PC-3 (cell line): ENCODE measurements at regions of chr3 and their contacts with region 1.

Region 1: GRCh38 chr3:49013755-49014628 is 4.4 kb downstream of the DALRD3 start:
- DNase-seq: peak; percentile 69
- ATAC-seq: peak; percentile 24
- H3K4me3 ChIP-seq: no peak overlapping the region
- H3K27ac ChIP-seq: no peak overlapping the region
- H3K4me1 ChIP-seq: peaks cover 11% of the 10 kb centered on the region; the same call in 1 of the 2 replicates
- H3K27me3 ChIP-seq: no peaks in the 10 kb centered on the region
- CTCF ChIP-seq: peak; percentile 82

Region 2: DNA sequence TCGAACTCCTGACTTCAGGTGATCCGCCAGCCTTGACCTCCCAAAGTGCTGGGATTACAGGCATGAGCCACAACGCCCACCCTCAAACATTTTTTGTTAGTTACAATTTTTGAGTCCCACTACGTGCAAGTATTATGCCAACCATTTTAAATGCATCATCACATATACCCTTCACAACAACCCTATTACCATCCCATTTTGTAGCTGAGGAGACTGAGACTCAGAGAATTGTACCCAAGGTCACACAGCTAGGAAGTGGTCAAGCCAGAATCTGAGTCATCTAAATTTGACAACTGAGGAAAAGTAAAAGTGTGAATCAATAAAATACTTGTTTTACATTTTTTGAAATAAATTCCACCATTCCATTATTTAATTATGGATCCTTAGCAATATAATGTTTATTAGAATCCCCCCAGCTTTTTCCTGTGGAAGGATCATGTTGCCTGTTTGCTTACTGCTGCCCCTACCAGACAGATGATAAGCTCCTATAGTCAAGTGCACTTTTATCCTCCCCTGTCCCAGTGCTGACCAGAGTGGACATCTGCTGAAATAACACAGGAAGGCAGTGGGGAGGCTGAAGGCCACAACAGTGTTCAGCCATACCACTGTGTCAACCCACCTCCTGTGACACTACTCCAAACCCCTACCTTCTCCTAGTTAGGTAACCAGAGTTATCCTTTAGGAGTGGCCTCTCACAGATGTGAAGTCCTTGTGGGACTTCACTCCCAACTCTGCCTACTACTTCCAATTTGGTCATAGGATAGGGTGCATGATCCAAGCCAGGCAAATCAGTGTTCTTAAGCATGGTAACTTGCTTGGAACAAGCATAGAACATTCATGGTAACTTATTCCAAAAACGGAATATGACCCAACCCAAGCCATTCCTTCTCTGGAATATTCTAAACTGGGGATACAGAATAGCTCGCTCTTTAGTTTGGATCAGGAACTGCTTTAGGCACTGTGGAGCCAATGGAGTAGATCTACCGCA is 194.5 kb before region 1 on chr3:
- CTCF ChIA-PET with region 1: no interaction called
- POLR2A ChIA-PET with region 1: no interaction called
- intact Hi-C with region 1: no loop called
- DNase-seq: no peak
- ATAC-seq: no peak
- H3K4me3 ChIP-seq: no peak overlapping the region
- H3K27ac ChIP-seq: no peak overlapping the region
- H3K4me1 ChIP-seq: 0 out of 2 replicates have a peak, but pooled peaks cover 9% of the 10 kb centered on the region
- H3K27me3 ChIP-seq: no peaks in the 10 kb centered on the region
- CTCF ChIP-seq: no peak

Region 3: DNA sequence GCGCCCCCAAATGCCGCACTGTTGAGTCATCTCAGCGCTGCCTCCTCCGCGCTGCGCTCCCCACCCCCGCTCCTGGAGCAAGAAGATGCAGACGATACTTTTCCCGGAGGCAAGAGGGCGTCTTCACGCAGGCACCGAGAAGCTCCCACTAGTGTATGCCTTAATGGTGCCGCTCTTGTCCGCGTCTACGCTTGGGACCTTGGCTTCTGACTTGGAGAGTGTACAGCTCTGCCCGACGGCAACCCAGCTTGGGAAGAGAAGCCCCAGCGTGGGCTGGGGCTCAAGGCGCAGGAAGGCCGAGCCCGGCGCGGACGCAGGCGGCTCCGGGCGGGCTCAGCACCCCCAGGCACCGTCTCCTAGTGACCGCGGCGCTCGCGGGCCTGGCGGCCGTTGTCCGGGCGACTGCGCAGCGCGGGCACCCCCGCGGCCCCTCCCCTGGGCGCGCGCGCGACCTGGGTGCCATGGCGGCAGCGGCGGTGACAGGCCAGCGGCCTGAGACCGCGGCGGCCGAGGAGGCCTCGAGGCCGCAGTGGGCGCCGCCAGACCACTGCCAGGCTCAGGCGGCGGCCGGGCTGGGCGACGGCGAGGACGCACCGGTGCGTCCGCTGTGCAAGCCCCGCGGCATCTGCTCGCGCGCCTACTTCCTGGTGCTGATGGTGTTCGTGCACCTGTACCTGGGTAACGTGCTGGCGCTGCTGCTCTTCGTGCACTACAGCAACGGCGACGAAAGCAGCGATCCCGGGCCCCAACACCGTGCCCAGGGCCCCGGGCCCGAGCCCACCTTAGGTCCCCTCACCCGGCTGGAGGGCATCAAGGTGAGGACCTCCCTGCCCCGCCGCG is 24.0 kb before region 1 on chr3 and contains the start of gene P4HTM:
- CTCF ChIA-PET with region 1: interaction called, 22 read pairs
- POLR2A ChIA-PET with region 1: no interaction called
- intact Hi-C with region 1: loop called (anchors 2 kb)
- DNase-seq: peak; percentile 88
- ATAC-seq: peak; percentile 73
- H3K4me3 ChIP-seq: peak within 1 kb of the TSS; percentile 90
- H3K27ac ChIP-seq: peak within 1 kb of the TSS; percentile 49
- H3K4me1 ChIP-seq: peaks cover 22% of the 10 kb centered on the region
- H3K27me3 ChIP-seq: no peaks in the 10 kb centered on the region
- CTCF ChIP-seq: peak; percentile 51
- total RNA-seq, gene P4HTM: 44.5 and 50.1 TPM in 2 replicates

Region 4: DNA sequence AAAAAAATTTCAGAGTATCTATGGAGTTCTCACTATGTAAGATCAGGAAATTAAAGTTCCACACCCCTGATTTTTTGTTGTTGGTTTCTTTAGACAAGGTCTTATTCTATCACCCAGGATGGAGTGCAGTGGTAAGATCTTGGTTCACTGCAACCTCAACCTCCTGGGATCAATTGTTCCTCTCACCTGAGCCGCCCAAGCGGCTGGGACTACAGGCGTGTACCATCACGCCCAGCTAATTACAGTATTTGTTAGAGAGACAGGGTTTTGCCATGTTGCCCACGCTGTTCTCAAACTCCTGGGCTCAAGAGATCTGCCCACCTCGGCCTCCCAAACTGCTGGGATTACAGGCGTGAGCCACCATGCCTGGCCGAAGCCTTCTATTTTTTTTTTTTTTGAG is 67.4 kb after region 1 on chr3:
- CTCF ChIA-PET with region 1: interaction called, 10 read pairs
- POLR2A ChIA-PET with region 1: no interaction called
- intact Hi-C with region 1: no loop called
- DNase-seq: no peak
- ATAC-seq: no peak
- H3K4me3 ChIP-seq: no peak overlapping the region
- H3K27ac ChIP-seq: no peak overlapping the region
- H3K4me1 ChIP-seq: no peaks in the 10 kb centered on the region
- H3K27me3 ChIP-seq: no peaks in the 10 kb centered on the region
- CTCF ChIP-seq: no peak